Colonic mucosa (tissue), 4 donors: ENCODE measurements at regions of chr17 and their contacts with region 1.

Region 1: DNA sequence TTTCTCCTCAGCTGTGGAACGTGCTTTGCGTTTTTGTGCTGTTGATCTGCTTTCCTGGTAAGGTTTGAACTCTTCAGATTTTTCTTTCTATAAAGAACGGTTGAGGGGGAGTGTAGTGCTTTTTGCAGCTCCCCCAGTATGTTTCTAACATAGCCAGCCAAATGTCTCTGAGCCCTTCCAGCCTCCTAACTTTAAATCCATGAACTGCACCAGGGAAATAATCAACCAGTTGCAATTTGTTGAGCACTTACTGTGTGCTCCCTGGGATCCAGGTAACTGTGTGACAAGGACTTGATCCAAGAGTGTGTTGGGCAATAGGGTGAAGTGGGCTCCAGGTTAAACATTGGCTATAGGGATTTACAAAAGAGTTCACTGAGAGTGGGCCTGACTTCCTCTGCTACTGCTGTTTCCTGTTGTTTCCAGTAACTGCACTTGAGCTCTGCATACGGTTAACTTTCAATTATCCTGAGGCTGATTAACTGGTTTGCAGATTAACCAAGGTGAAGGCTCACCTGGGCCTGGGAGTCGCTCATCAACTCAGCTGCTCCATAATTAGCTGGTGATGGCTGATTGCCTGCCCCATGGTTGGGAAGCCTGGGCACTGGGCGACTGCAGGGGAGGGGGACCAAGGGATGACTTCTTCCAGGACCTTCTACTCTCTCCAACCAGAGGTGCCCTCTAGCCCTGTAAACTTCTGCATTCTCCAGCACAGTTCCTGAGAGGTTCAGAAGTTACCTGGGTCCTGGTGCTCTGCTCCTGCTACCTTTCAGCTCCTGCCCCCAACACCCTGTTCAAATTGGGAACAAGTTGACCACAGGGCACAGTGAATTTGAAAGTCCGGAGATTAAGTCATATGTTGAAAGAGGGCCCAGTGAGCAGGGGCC is 19.5 kb downstream of the HLF start:
- DNase-seq: no peak
- H3K4me3 ChIP-seq: no peak overlapping the region
- H3K27ac ChIP-seq: peak overlapping the region; percentile 14
- H3K4me1 ChIP-seq: no peaks in the 10 kb centered on the region
- H3K27me3 ChIP-seq: no peaks in the 10 kb centered on the region
- CTCF ChIP-seq: no peak

Region 2: DNA sequence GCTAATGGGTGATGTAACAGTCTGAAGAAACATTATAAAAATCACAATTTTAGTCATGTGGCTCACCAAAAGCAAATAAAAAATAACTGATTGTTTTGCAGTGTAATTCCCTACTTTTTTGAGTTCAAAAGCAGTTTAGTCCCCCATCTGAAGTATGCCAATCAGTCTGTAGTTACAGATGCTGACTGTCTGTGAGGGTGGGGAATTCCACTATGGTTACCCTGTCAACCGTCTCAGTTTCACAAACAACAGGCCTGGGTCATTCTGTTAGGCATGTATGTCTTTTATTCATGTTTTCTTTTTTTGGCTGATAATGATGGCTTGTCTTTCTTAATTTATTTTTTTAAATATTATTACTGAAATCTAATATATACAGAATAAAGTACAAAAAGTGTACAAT is 246.4 kb before region 1 on chr17:
- intact Hi-C with region 1: no loop called
- DNase-seq: no peak
- H3K4me3 ChIP-seq: no peak overlapping the region
- H3K27ac ChIP-seq: no peak overlapping the region
- H3K4me1 ChIP-seq: no peaks in the 10 kb centered on the region
- H3K27me3 ChIP-seq: no peaks in the 10 kb centered on the region
- CTCF ChIP-seq: no peak

Region 3: GRCh38 chr17:55238179-55238930 is 45.9 kb before region 1 on chr17:
- intact Hi-C with region 1: loop called (anchors 5 kb)
- DNase-seq: peak; percentile 93
- H3K4me3 ChIP-seq: peak overlapping the region; percentile 40
- H3K27ac ChIP-seq: peak overlapping the region; percentile 40
- H3K4me1 ChIP-seq: peaks cover 6% of the 10 kb centered on the region
- H3K27me3 ChIP-seq: no peaks in the 10 kb centered on the region
- CTCF ChIP-seq: no peak